Heart left ventricle (tissue), 16 donors: ENCODE measurements at regions of chr5 and their contacts with region 1.

Region 1: DNA sequence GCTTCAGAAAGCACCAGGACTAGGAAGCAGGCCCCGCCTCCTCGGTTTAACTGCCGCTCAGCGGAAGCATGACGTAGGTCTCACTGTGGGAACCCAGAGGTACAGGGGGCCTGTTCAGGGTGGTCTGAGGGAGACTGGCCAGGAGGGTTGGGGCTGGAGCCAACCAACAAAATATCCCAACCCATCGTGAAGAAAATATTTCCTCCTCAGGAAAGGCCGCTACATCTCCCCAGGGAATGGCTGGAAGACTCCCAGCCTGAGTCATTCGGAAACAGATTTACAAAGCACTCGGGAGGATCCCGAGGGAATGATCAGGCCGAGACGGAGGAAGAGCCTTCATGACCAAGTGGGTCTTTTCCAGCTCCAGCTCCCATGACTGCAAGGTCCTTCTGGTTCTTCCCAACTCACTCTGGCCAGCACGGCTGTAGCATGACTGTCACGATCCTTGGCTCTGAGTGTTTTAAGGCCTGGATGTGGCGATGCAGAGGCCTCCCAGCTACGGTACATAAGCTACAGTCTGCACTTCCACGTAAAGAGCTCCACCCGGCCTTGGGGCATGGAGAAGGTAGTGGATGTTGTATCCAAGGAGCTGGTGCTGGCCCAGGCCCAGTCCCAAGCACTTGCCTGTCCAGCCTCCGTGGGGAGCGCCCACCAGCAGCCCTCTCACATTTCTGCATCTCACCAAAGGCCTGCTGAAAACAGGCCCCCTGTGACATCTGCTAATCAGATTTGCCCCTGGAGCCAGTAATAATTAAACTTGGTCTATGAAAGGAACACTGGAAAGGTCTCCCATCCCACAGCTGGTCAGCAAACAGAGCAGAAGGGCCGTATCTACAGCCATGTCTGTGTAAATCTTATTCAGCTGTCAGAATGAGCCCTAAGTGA is 100.6 kb downstream of the LHFPL2 start:
- DNase-seq: peak; percentile 89 to 94 (median 94)
- ATAC-seq: peak; percentile 88 to 93 (median 91)
- H3K4me3 ChIP-seq: peak overlapping the region in 1 of 12 donors; percentile 29
- H3K27ac ChIP-seq: peak overlapping the region; percentile 68 to 91 (median 84)
- H3K4me1 ChIP-seq: peaks cover 15 to 74% (median 47%) of the 10 kb centered on the region in 12 donors
- H3K27me3 ChIP-seq: no peaks in the 10 kb centered on the region
- CTCF ChIP-seq: no peak
- POLR2A ChIP-seq: peak in 1 of 2 donors; percentile 10

Region 2: DNA sequence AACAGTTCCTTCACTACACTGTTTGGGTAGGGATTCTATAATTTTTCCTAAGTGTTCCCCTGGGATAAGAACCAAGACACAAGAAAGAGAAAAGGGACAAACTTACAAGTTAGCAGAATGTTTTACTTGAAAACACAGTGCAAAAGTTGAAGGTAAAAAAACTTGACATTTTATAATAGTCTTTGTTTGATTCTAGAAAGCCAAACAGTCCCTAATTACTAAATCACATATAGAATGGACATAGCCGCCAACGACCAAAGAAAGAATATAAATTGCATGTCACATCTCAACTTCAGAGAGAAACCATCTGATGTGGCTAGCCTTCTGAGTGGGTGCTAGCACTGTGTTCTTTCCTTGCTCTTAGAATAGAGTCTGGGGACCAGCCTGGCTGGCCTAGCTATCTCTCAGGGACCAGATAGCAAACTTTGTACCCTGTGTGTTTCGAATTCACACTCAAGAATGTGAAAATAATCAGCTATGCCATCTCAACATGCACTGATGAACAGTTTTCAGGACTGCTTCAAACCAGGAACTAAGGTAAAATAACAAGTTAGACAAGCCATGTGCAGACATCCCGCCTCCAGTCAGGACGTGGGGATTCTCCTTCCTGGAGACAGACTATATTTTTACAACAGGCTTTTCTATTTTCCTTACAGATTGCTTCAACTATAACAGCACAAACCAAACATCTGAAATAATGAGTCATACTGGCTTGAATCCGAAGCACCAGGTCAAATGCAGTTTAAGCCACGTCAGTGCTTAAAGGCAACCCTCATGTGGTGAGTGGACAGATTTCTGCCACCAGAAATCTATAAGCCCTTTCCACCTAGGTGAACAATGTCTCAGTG is 46.9 kb after region 1 on chr5:
- intact Hi-C with region 1: loop called in 2 of 10 experiments (anchors 5 to 10 kb)
- DNase-seq: peak in 2 of 5 donors; percentile 35 to 51
- ATAC-seq: peak; percentile 63 to 86 (median 80)
- H3K4me3 ChIP-seq: no peak overlapping the region
- H3K27ac ChIP-seq: peak overlapping the region in 10 of 12 donors; percentile 7 to 66 (median 56)
- H3K4me1 ChIP-seq: peaks cover 0 to 69% (median 31%) of the 10 kb centered on the region in 12 donors
- H3K27me3 ChIP-seq: no peaks in the 10 kb centered on the region
- CTCF ChIP-seq: no peak
- POLR2A ChIP-seq: no peak

Region 3: DNA sequence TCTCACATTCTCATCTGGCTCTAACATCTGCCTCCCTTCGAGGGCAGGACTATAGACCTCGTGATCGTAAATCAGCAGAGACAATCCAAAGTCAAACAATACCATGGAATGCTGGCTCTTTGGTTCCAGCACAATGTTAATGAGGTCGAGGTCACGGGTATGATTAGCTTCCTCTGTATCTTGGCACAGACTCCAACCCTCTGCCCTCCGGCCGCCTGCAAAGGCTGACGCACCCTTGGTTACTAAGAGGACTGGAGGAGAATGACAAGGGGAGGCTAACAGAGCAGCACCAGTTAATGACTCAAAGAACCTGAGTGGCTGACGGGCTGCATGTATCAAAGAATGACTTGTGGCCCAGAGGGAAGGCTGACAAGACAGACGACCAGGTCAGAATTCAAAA is 90.5 kb after region 1 on chr5:
- intact Hi-C with region 1: loop called in 3 of 10 experiments (anchors 5 to 10 kb)
- DNase-seq: peak; percentile 65 to 87 (median 71)
- ATAC-seq: peak; percentile 82 to 93 (median 92)
- H3K4me3 ChIP-seq: peak overlapping the region in 1 of 12 donors; percentile 17
- H3K27ac ChIP-seq: peak overlapping the region in 10 of 12 donors; percentile 17 to 60 (median 40)
- H3K4me1 ChIP-seq: peaks cover 4 to 73% (median 43%) of the 10 kb centered on the region in 12 donors
- H3K27me3 ChIP-seq: no peaks in the 10 kb centered on the region
- CTCF ChIP-seq: no peak
- POLR2A ChIP-seq: no peak

Region 4: DNA sequence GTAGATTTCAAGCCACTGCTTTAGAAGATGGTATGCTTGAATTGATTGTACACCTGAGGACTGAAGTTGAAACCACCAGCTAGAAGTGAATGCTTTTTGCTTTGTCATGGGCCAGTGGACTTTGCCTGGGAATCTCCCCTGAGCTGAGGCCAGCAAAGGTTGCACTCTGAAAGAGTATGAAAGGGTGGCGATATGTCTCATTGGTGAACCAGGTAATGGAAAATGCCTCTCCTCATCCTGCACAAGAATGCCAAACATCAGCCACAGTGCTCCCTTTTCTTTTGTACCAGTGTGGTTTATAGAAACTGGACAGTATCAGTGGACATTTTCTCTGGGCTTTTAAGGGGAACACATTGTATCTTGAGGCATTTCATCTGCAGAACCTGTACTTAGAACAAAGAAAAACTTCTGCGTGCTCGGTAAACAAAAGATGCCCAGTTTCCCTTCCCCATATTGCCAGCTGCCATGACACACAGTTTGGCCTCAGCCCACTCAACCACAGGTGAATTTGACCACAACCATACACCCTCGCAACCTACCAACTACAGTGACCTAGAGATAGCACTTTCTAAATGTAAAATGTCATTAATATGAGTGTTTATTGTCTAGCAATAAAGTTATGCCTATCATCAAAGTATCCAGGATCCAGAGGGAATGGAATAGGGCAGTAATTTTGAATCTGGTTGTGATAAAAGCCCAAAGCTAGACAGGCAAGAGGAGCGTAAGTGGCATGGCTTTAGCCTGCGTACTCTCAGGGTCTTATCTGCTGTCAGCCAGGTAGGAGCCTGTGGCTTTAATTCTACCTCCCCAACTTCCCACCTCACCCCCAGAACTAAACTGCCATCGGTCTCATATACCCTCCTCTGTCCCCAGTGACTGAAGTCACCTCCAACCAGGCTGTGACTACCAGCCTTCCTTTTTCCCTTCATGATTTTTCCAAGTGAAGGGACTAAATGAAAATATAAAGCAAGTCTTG is 180.1 kb after region 1 on chr5:
- intact Hi-C with region 1: no loop called
- DNase-seq: no peak
- ATAC-seq: no peak
- H3K4me3 ChIP-seq: no peak overlapping the region
- H3K27ac ChIP-seq: no peak overlapping the region
- H3K4me1 ChIP-seq: no peaks in the 10 kb centered on the region
- H3K27me3 ChIP-seq: no peaks in the 10 kb centered on the region
- CTCF ChIP-seq: no peak
- POLR2A ChIP-seq: no peak

Region 5: GRCh38 chr5:78899922-78900362 is 352.0 kb after region 1 on chr5:
- intact Hi-C with region 1: loop called in 4 of 10 experiments (anchors 5 to 10 kb)
- DNase-seq: no peak
- ATAC-seq: peak in 1 of 4 donors; percentile 36
- H3K4me3 ChIP-seq: no peak overlapping the region
- H3K27ac ChIP-seq: no peak overlapping the region
- H3K4me1 ChIP-seq: peaks cover 0 to 11% (median under 1%) of the 10 kb centered on the region in 12 donors
- H3K27me3 ChIP-seq: no peaks in the 10 kb centered on the region
- CTCF ChIP-seq: peak; percentile 40 to 74 (median 58)
- POLR2A ChIP-seq: no peak

Region 6: GRCh38 chr5:78908173-78909061 is 360.4 kb after region 1 on chr5:
- intact Hi-C with region 1: loop called in 4 of 10 experiments (anchors 5 to 10 kb)
- DNase-seq: peak; percentile 67 to 86 (median 79)
- ATAC-seq: peak; percentile 76 to 94 (median 87)
- H3K4me3 ChIP-seq: peak overlapping the region in 8 of 12 donors; percentile 8 to 33 (median 20)
- H3K27ac ChIP-seq: peak overlapping the region; percentile 26 to 79 (median 68)
- H3K4me1 ChIP-seq: peaks cover 0 to 59% (median 33%) of the 10 kb centered on the region in 12 donors
- H3K27me3 ChIP-seq: no peaks in the 10 kb centered on the region
- CTCF ChIP-seq: peak in 2 of 12 donors; percentile 4 to 10
- POLR2A ChIP-seq: no peak